ENCODE measurements at regions of chr10 and their contacts with region 1.

Region 1: DNA sequence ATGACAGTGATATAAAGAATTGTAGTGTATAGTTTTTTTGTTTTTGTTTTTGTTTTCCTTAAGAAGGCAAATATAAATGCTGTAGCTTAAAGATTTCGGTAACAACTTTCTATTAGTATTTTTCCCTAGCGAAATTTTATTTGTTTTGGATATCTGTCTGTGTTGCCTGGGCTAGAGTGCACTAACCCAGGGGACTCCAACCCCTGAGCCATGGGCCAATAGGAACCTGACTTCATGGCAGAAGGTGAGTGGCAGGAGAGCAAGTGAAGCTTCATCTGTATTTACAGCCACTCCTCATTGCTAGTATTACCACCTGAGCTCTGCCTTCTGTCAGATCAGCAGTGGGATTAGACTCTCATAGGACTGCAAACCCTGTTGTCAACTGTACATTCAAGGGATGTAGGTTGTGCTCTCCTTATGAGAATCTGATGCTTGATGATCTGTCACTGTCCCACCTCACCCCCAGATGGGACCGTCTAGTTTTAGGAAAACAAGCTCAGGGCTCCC is 65.4 kb upstream of the CCAR1 start:
- DNase-seq: no peak
- H3K4me3 ChIP-seq: no peak overlapping the region
- H3K27ac ChIP-seq: no peak overlapping the region
- H3K4me1 ChIP-seq: no peaks in the 10 kb centered on the region
- H3K27me3 ChIP-seq: no peaks in the 10 kb centered on the region
- CTCF ChIP-seq: no peak

Region 2: DNA sequence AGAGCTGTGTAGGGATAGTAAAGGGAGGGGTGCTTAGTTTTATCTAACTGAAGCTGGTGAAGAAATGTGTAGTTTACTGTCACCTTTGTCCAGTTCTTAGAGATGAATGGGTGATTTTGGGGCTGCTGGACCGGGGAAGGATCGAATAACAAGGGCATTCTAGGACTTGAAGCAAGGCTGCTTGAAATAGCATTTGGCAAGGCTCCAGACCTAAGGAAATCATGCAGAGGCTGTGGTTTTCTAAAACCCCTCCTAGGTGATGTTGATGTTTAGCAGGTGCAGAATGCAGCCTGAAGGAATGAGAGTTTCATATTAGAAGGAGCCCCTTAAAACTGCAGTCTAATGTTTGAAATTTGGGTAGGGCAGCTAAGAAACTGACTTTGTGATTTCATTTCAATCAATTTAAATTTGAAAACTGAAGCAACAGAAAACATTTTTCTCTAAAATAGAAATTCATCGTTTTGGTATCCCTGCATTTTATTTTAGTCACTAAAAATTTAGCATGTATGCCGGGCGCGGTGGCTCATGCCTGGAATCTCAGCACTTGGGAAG is 27.0 kb before region 1 on chr10:
- CTCF ChIA-PET with region 1: no interaction called
- dilution Hi-C with region 1: loop called (anchors 5 kb)
- in situ Hi-C with region 1: no loop called
- intact Hi-C with region 1: no loop called
- DNase-seq: no peak
- H3K4me3 ChIP-seq: no peak overlapping the region
- H3K27ac ChIP-seq: no peak overlapping the region
- H3K4me1 ChIP-seq: no peaks in the 10 kb centered on the region
- H3K27me3 ChIP-seq: no peaks in the 10 kb centered on the region
- CTCF ChIP-seq: no peak